Right lobe of liver (tissue), 6 donors: ENCODE measurements at regions of chr3 and their contacts with region 1.

Region 1: DNA sequence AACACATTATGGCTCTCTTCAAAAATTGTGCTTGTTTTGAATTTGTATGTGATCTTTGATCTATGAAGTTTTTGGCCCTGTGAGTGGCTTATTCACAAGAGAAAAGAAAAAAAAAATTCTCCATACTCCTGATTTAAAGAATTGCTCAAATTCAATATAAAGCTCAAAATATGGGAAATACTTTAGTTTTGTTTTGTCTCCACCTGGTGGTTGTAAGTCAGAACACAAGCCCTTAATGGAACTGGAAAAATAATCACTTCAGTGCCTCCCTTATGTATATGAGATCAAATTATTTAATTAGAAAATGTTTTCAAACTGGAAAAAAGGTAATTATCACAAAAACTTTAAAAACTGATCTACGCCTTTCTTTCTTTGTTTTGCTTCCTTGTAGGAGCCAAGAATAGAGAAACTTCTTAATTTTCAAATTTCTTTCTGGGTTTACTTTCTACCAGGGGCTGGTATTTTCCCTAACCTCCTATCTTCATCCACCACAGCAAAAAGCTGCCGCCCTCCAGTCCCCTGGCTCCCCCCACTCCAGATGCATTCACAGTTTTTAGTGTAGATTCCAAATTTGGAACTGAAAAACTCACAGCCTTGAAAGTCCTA is 50.6 kb downstream of the SERP1 start:
- DNase-seq: no peak
- ATAC-seq: peak; percentile 64 to 85 (median 80)
- H3K4me3 ChIP-seq: no peak overlapping the region
- H3K27ac ChIP-seq: no peak overlapping the region
- H3K4me1 ChIP-seq: no peaks in the 10 kb centered on the region
- H3K27me3 ChIP-seq: no peaks in the 10 kb centered on the region
- CTCF ChIP-seq: peak; percentile 81 to 90 (median 86)
- POLR2A ChIP-seq: no peak

Region 2: GRCh38 chr3:150227839-150228238 is 267.8 kb before region 1 on chr3:
- intact Hi-C with region 1: loop called (anchors 5 to 10 kb)
- DNase-seq: peak in 1 of 3 donors; percentile 43
- ATAC-seq: peak; percentile 69 to 81 (median 74)
- H3K4me3 ChIP-seq: no peak overlapping the region
- H3K27ac ChIP-seq: no peak overlapping the region
- H3K4me1 ChIP-seq: no peaks in the 10 kb centered on the region
- H3K27me3 ChIP-seq: no peaks in the 10 kb centered on the region
- CTCF ChIP-seq: peak; percentile 49 to 60 (median 58)
- POLR2A ChIP-seq: no peak

Region 3: DNA sequence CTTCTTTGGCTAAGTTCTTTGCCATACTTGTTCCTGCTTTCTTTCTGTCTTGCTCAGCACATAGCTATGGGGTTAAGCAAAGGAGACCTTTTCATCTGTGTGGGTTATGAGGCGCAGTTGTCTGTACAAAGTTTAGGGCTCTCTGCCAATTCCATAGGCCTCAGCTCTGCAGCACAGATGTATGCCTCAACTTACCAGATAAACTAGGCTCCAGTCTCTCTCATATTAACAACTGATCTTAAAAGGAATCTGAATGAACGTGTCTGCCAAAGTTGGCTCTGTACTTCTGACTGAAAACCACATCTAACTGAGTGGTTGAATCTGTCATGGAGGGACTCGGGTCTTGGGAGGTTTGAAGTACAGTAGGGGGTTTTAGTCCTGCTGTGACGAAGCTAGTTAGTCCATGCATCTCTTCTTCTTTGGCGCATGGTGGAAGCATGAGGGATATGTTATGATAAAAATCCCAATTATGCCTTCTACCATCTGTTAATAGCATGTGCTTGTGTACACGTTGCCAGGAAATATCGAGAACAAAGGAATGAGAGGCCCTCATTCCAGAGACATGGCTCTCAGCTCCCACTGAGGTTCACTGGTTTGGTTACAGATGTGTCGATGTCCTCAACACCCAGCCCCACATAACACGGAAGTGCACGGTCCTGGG is 202.1 kb before region 1 on chr3:
- intact Hi-C with region 1: loop called in 1 of 2 experiments (anchors 10 kb)
- DNase-seq: no peak
- ATAC-seq: no peak
- H3K4me3 ChIP-seq: no peak overlapping the region
- H3K27ac ChIP-seq: no peak overlapping the region
- H3K4me1 ChIP-seq: no peaks in the 10 kb centered on the region
- H3K27me3 ChIP-seq: no peaks in the 10 kb centered on the region
- CTCF ChIP-seq: no peak
- POLR2A ChIP-seq: no peak

Region 4: DNA sequence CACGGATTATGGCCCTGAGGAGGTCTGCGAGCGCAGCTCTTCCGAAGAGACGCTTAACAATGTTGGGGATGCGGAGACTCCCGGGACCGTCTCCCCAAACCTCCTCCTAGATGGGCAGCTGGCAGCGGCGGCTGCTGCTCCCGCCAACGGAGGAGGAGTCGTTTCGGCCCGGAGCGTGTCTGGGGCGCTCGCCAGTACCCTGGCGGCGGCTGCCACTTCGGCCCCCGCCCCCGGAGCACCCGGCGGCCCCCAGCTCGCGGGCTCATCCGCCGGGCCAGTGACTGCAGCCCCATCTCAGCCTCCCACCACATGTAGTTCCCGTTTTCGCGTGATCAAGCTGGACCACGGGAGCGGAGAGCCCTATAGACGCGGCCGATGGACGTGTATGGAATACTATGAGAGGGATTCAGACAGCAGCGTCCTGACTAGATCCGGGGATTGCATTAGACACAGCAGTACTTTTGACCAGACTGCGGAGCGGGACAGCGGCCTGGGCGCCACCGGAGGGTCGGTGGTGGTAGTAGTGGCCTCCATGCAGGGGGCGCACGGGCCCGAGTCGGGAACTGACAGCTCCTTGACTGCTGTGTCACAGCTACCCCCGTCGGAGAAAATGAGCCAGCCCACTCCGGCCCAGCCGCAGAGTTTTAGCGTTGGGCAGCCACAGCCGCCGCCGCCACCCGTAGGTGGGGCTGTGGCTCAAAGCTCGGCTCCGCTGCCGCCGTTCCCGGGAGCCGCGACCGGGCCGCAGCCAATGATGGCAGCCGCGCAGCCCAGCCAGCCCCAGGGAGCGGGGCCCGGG is 86.0 kb before region 1 on chr3:
- intact Hi-C with region 1: loop called in 1 of 2 experiments (anchors 5 kb)
- DNase-seq: peak; percentile 80 to 84 (median 81)
- ATAC-seq: peak; percentile 29 to 58 (median 50)
- H3K4me3 ChIP-seq: peak overlapping the region; percentile 79 to 86 (median 83)
- H3K27ac ChIP-seq: peak overlapping the region; percentile 99 to 100 (median 99)
- H3K4me1 ChIP-seq: peaks cover 0 to 18% (median 7%) of the 10 kb centered on the region in 4 donors
- H3K27me3 ChIP-seq: no peaks in the 10 kb centered on the region
- CTCF ChIP-seq: peak; percentile 46 to 67 (median 55)
- POLR2A ChIP-seq: peak; percentile 67

Region 5: GRCh38 chr3:150623945-150624344 is 128.3 kb after region 1 on chr3:
- intact Hi-C with region 1: no loop called
- DNase-seq: no peak
- ATAC-seq: no peak
- H3K4me3 ChIP-seq: no peak overlapping the region
- H3K27ac ChIP-seq: no peak overlapping the region
- H3K4me1 ChIP-seq: no peaks in the 10 kb centered on the region
- H3K27me3 ChIP-seq: no peaks in the 10 kb centered on the region
- CTCF ChIP-seq: no peak
- POLR2A ChIP-seq: no peak